WTC11 (cell line): ENCODE measurements at regions of chr17 and their contacts with region 1.

Region 1: DNA sequence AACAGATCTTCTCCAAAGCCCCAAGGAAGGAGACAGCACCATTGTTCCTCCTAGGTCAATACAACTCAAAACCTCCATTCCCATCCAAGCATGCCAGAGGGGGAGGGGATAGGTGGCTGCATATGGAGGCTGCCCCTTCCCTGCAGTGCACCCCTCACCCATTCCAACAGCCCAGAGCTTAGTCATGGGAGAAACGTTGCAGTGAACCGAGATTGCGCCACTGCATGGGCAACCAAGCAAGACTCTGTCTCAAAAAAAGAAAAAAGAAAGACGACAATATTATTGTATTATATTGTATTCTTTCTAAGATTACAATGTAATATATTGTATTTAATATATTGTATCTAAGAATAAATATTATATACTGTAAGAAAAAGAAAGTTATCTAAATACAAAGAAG is 36.4 kb upstream of the CD300E start:
- DNase-seq: no peak
- ATAC-seq: no peak
- H3K4me3 Mint-ChIP-seq: no peak overlapping the region
- H3K27ac Mint-ChIP-seq: no peak overlapping the region
- H3K4me1 Mint-ChIP-seq: peaks cover 20% of the 10 kb centered on the region
- H3K27me3 Mint-ChIP-seq: no peaks in the 10 kb centered on the region; the same call in none of the 2 replicates
- CTCF ChIP-seq: no peak

Region 2: DNA sequence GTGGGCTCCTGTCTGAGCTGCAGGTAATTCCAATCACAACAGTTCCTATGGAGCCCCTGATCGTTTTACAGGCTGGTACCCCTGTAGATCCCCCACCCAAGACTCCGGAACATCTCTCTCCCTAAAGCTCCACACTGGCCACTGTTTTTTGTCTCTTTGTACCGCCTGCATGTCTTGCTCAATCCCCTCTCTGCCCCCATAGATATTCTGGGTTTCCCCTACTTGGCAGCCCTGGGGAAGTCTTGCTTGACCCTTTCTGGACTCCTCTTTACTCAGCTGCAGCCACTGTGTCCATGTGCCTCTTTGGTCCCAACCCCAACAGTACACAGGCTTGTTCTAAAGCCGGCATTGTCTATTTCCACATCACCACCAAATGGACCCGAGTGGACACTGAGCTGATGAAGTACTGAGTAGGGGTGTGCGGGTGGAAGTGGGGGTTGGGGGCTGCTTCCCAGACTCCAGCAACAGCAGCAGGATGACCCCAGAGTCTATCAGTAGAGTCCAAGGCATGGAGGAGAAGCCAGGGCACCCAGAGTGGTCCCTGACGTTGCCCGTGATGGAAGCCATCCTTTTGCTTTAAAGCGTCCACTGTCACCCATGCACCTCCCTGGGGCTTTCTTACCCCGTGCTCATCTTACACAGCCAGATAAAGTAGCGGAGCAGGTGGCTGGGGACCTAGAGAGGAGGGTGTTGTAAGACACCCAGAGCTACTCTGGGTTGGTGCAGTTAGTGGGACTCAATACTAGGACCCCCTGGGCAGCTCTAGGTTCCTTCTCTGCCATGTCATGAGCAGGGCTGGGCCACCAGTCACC is 135.0 kb before region 1 on chr17:
- CTCF ChIA-PET with region 1: no interaction called
- POLR2A ChIA-PET with region 1: no interaction called
- DNase-seq: no peak
- ATAC-seq: no peak
- H3K4me3 Mint-ChIP-seq: no peak overlapping the region
- H3K27ac Mint-ChIP-seq: no peak overlapping the region
- H3K4me1 Mint-ChIP-seq: no peaks in the 10 kb centered on the region
- H3K27me3 Mint-ChIP-seq: peaks cover 24% of the 10 kb centered on the region
- CTCF ChIP-seq: no peak

Region 3: GRCh38 chr17:74631468-74632450 is 28.1 kb before region 1 on chr17:
- CTCF ChIA-PET with region 1: interaction called, 11 read pairs
- POLR2A ChIA-PET with region 1: interaction called, 4 read pairs
- DNase-seq: no peak
- ATAC-seq: peak; percentile 36; the same call in 1 of the 2 replicates
- H3K4me3 Mint-ChIP-seq: no peak overlapping the region
- H3K27ac Mint-ChIP-seq: peak overlapping the region; percentile 61; the same call in 1 of the 2 replicates
- H3K4me1 Mint-ChIP-seq: peaks cover 50% of the 10 kb centered on the region
- H3K27me3 Mint-ChIP-seq: peaks cover 15% of the 10 kb centered on the region
- CTCF ChIP-seq: no peak

Region 4: DNA sequence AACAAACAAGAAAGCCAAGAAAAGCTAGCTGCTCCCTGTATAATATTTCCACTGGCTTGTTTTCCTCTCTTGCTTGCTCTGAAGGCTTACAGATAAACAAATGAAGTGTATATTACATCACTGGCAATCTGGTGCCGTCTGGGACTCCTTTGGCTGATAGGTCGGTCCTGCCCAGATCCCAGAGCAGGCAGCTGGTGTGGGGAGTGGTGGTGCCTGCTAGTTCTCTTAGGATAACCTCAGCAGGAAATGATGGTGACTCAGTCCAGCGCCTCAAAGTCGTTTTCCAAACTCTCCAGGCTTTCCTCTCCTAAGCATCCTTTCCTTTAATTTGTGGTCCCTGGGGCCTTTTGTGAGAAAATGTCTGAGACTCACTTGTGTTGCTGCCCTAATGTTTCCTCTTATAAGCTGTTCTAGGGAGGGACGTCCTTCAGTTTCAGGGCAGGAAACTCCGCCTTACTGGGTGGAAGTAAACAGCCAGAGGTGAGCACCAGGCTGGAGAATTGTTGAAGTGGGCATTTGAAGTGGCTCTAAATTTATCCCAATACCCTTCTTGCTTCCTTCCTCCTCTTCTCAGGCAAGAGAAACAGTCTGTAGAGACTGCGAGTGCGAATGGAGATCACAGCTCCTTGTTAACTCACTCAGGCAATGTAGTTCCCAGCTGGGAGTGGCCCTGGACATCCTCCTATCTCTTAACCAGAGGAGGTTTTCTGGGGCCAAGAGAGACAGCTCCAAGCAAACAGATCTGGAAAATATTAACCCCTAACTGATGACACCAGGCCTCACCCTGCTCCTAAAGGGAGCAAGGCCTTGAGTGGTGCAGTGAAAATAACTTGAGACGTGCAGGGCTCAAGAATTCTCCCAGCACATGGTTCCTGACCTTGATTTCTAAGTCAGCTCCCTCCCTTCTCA is 17.9 kb after region 1 on chr17:
- CTCF ChIA-PET with region 1: interaction called, 13 read pairs
- POLR2A ChIA-PET with region 1: no interaction called
- DNase-seq: no peak
- ATAC-seq: peak; percentile 84
- H3K4me3 Mint-ChIP-seq: no peak overlapping the region
- H3K27ac Mint-ChIP-seq: no peak overlapping the region; the same call in 1 of the 2 replicates
- H3K4me1 Mint-ChIP-seq: peaks cover 17% of the 10 kb centered on the region
- H3K27me3 Mint-ChIP-seq: peaks cover 30% of the 10 kb centered on the region
- CTCF ChIP-seq: no peak

Region 5: DNA sequence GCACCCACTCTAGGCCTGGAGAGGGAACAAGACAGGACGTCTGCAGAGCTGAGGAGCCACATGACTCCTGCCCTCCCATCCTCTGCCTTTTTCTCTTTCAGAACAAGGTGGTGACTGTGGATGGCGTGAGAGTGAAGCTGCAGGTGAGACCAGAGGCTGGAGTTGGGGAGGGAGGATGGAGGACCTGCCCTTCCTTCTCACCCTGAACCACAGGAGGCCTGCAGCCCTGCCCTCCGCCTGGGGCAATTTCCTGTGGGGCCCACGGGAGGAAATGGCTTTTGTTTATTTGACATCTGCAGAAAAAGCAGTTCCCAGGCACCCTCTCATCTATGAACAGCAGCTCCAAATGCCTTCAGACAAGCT is 82.2 kb after region 1 on chr17:
- CTCF ChIA-PET with region 1: interaction called, 296 read pairs
- POLR2A ChIA-PET with region 1: interaction called, 13 read pairs
- DNase-seq: no peak
- ATAC-seq: no peak
- H3K4me3 Mint-ChIP-seq: no peak overlapping the region
- H3K27ac Mint-ChIP-seq: no peak overlapping the region
- H3K4me1 Mint-ChIP-seq: peaks cover 53% of the 10 kb centered on the region
- H3K27me3 Mint-ChIP-seq: peaks cover 6% of the 10 kb centered on the region
- CTCF ChIP-seq: no peak

Region 6: DNA sequence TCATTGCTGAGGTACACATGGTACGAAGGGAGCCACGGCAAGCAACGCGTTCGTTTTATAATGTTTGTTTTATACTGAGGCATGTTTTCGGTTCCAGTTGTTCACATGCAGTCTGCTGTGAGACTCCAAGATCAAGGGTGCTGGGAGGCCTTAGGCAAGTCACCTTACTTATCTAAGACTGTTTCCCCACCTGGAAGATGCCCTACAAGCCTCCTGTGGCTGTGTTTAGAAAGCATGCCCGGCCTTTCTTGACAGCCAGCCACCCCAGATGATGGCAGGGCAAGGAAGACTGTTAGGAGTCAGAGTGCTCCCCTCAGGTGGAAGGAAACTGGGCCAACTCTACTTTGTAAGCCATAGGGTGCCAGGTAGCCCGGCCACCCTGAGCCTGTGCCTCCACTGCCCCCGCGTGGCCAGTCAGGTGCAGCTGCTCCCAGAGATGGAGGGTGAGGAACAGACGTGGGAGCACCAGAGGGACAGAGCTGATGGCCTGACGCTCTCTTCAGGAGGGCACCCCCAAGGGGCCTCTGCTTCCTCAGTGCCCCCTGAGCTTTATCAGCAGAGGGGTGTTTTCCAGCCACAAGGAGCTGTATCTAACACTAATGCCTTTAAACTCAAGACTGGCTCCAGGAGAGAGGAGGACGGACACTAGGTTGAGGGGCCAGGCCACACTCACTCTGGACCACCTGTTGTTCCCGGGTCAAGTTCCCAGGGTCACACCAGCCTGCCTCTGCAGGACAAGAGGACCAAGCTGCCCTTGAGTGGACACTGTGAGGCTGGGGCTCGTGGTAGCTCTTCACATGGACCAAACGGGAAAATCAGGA is 110.8 kb after region 1 on chr17:
- CTCF ChIA-PET with region 1: interaction called, 28 read pairs
- POLR2A ChIA-PET with region 1: no interaction called
- DNase-seq: peak; percentile 78
- ATAC-seq: peak; percentile 91
- H3K4me3 Mint-ChIP-seq: no peak overlapping the region
- H3K27ac Mint-ChIP-seq: no peak overlapping the region; the same call in none of the 2 replicates
- H3K4me1 Mint-ChIP-seq: peaks cover 9% of the 10 kb centered on the region
- H3K27me3 Mint-ChIP-seq: no peaks in the 10 kb centered on the region
- CTCF ChIP-seq: peak; percentile 46; the same call in 1 of the 2 replicates

Region 7: DNA sequence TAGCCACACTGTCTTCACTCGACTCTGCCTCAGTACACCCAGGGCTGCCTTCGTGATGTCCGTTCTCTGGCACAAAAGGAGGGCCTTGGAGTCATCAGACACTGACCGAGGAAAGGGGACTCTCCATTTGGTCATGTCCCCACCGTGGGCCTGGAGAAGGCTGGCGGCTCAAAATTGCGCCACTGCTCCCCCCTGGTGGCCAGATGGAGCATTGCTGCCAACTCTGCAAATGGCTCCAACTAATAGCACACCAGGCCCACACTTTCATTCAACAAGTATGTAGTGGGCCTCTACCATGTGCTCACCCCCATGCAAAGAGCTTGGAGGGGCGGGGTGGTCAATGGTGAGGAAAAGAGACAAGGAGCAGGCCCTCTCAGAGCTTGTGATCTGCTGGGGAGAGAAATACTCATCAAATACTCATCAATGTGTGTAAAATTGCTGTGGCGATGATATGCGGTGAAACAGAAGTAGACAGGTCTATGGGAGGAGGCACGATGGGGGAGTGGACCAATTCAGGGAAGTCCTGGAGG is 205.0 kb after region 1 on chr17:
- CTCF ChIA-PET with region 1: interaction called, 37 read pairs
- POLR2A ChIA-PET with region 1: no interaction called
- DNase-seq: peak; percentile 87
- ATAC-seq: peak; percentile 63
- H3K4me3 Mint-ChIP-seq: no peak overlapping the region
- H3K27ac Mint-ChIP-seq: peak overlapping the region; percentile 16
- H3K4me1 Mint-ChIP-seq: peaks cover 14% of the 10 kb centered on the region
- H3K27me3 Mint-ChIP-seq: peaks cover 27% of the 10 kb centered on the region
- CTCF ChIP-seq: peak; percentile 97